ENCODE measurements at regions of chr2 and their contacts with region 1.

Region 1: GRCh38 chr2:222797261-222797660 is 63.6 kb upstream of the ACSL3 start:
- H3K4me3 Mint-ChIP-seq: no peak overlapping the region
- H3K27ac Mint-ChIP-seq: peak overlapping the region; percentile 80
- H3K4me1 Mint-ChIP-seq: peaks cover 52% of the 10 kb centered on the region
- H3K27me3 Mint-ChIP-seq: no peaks in the 10 kb centered on the region

Region 2: GRCh38 chr2:222730366-222730999 is 66.8 kb before region 1 on chr2:
- intact Hi-C with region 1: loop called (anchors 10 kb)
- H3K4me3 Mint-ChIP-seq: no peak overlapping the region
- H3K27ac Mint-ChIP-seq: no peak overlapping the region
- H3K4me1 Mint-ChIP-seq: peaks cover 29% of the 10 kb centered on the region
- H3K27me3 Mint-ChIP-seq: no peaks in the 10 kb centered on the region

Region 3: DNA sequence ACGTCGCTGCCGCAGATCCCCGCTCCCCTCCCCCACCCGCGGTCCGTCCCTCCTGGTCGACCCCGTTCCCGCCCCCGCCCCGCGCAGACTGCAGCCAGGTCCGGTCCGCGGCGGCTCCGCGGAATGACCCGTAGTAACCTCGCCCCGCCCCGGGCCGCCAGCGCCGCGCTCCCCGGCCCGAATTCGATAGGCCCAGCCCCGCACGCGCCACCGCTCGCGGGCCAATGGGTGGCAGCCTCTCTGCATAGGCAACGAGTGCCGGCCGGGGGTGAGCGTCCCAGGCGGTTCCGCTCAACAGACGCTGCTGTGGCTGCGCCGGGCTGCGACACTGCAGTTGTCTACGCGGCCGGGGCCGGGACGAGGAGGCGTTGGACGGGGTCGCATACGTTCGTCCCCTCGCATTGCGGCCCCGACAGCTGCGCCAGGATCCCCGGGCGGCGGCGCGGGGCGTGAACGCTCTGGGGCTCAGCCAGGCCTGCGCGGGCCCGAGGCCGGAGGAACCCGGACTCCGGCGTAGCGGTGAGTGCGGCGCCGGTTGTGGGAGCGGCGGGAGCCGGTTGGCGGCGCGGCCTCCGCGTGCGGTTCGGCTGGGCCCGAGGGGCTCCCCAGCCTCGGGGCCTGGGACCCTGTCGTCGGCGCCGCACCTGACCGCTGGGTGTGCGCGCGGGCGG is 63.6 kb after region 1 on chr2 and contains the start of gene ACSL3:
- intact Hi-C with region 1: loop called (anchors 5 kb)
- H3K4me3 Mint-ChIP-seq: peak within 1 kb of the TSS; percentile 20
- H3K27ac Mint-ChIP-seq: no peak within 1 kb of the TSS
- H3K4me1 Mint-ChIP-seq: peaks cover 15% of the 10 kb centered on the region
- H3K27me3 Mint-ChIP-seq: no peaks in the 10 kb centered on the region